BJ (cell line): ENCODE measurements at regions of chr2 and their contacts with region 1.

Region 1: GRCh38 chr2:38554973-38555595 is 47.6 kb downstream of the HNRNPLL start:
- DNase-seq: no peak
- H3K4me3 ChIP-seq: no peak overlapping the region
- H3K27me3 ChIP-seq: no peaks in the 10 kb centered on the region
- CTCF ChIP-seq: peak; percentile 51

Region 2: DNA sequence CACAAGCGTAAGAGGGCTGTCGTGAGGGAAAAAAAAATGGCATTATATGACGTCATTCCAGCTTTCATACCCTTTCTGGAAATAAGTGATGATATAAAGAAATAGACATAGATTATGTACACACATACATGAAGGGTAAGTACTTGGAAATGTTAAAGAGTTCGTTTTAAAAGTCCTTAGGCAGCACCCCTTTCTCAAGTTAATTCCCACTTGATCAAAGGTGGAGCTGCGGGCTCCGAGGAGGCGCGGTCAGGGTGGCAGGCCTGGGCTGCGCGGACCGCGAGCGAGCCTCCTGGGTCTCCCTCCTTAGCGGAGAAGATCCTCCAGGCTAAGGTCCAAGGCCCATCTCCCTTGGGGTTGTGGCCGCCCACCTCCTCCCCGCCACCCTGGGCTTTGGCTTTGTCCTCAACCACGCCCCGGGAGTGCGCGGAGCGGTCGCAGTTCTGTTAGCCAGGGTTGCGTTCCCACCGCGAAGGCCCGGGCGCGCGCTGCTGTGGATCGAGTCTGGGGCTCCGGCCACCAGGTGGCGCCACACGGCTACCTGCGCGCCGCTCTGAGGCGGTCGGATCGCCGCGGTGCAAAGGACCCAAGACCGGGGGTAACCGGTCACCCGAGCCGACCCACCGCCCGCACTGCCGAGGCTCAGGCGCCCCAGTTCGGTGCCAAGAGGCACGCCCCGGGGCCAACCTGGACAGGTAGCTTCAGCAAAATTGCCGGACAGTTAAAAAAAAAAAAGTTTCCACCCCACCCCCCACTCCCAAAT is 19.2 kb before region 1 on chr2:
- CTCF ChIA-PET with region 1: interaction called, 16 read pairs
- POLR2A ChIA-PET with region 1: no interaction called
- DNase-seq: no peak
- H3K4me3 ChIP-seq: peak overlapping the region; percentile 54
- H3K27me3 ChIP-seq: peaks cover 3% of the 10 kb centered on the region; the same call in 1 of the 2 replicates
- CTCF ChIP-seq: peak; percentile 88

Region 3: DNA sequence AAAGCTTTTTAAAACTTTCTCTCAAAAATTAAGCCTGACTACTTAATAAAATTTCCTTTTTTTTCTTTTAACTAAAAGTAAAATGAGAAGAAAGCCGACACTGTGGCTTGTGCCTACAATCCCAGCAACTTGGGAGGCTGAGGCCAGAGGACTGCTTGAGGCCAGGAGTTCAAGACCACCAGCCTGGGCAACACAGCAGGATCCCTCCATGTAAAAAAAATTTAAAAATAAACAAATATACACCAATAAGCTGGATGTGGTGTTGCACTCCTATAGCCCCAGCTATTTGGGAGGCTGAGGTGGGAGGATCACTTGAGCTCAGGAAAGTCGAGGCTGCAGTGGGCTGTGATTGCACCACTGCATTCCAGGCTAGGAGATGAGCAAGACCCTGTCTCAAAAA is 10.2 kb after region 1 on chr2:
- CTCF ChIA-PET with region 1: interaction called, 10 read pairs
- POLR2A ChIA-PET with region 1: no interaction called
- DNase-seq: no peak
- H3K4me3 ChIP-seq: no peak overlapping the region
- H3K27me3 ChIP-seq: no peaks in the 10 kb centered on the region
- CTCF ChIP-seq: no peak

Region 4: DNA sequence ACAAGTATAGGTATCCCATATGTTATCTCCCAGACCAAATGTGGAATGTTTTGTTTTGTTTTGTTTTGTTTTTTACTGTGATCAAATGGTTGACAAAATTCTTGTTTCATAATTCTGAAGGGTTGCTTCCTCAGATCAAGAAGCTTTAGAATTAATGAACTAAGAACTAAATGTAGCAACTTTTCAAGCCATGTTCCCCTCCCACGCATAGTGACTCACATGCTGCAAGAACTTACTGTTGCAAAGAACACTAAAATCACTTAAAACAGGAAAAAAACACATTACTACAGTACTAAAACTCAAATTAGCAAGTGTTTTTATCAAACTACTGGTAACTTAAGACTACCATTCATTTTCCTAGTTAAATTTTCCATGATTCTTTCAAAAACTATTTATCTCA is 17.1 kb after region 1 on chr2:
- CTCF ChIA-PET with region 1: interaction called, 10 read pairs
- POLR2A ChIA-PET with region 1: no interaction called
- DNase-seq: peak; percentile 37
- H3K4me3 ChIP-seq: no peak overlapping the region
- H3K27me3 ChIP-seq: no peaks in the 10 kb centered on the region
- CTCF ChIP-seq: no peak